Activated CD8-positive, alpha-beta T cell treated with anti-CD3 and anti-CD28 coated beads, Interleukin-2, amount 10 ng/mL, durations not matched to agents 7 days and 5 days (primary cell): ENCODE measurements at regions of chr7 and their contacts with region 1.

Region 1: DNA sequence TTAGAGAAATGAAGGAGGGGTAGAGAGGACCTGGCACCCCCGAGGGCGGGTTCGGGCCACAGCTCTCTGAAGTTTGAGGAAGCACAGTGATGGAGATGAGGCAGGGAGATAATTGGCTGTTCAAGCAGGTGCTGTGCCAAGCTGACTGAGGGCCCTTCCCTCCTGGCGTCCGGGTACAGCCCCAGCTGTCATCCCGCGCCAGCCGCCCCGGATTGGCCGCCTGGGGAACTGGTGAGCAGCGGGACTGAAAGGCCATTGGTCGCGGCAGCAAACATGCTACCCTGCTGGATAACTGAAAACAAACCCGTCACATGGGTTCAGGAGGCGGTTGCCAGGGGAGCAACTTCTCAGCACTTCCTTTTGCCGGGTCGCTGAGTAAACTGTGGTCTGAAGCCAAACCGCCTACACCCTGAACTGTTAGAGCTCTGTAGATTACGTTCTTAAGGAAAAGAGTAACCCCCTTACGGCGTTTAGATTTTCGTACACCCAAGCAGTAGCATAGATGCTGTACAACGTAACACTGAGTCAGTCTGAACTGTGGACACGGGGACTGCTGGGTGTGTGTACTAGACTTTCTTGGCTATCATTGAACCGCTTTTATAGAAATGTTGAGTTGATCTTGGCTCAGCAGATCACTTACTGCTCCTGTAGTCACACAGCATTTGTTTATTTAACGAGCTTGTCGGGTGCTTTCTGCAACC is 1.3 kb downstream of the INSIG1 start:
- DNase-seq: peak; percentile 98
- ATAC-seq: peak; percentile 78
- H3K4me3 Mint-ChIP-seq: peak overlapping the region; percentile 95
- H3K27ac Mint-ChIP-seq: peak overlapping the region; percentile 97
- H3K4me1 Mint-ChIP-seq: peaks cover 57% of the 10 kb centered on the region
- H3K27me3 Mint-ChIP-seq: peaks cover 3% of the 10 kb centered on the region

Region 2: DNA sequence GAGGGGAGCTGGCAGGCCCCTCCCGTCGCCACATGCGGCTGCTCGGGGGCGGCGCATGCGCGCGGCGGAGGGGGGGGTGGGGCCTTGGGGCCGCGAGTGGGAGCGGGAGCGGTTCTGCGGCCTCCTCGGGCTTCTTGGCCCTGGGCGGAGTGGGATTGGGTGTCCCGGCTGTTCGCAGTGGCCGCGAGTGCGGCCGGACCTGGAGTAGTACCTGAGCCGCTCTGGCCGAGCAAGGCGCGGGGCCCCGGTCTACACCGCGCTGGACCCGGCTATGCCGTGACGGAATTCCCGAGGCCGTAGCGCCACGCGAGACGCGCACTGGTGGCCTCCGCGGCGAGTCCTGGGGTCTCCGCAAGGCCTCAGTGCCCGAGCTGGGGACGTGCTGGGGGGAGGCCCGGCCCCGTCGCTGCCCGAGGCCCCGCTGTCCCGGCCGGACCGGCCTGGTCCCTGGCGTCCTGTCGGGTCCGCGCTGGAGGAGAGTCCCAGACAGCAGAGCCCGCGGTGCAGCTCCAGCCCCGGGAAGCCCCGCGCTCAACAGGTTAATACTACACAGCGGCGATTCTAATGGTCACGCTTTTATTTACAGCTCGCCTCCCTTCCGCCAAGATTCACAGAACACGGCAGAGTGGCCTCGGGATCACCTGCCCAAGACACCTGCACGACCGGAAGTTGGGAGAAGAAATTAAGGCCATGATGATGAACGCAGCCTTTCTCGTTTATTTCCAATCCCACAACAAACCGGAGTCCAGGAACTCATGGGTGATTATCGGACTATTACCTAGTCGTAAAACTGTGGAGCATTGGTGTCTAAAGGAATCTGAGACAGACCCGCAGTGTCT is 295.4 kb before region 1 on chr7:
- CTCF ChIA-PET with region 1: interaction called, 3 read pairs
- POLR2A ChIA-PET with region 1: interaction called, 22 read pairs
- DNase-seq: peak; percentile 85
- ATAC-seq: peak; percentile 78
- H3K4me3 Mint-ChIP-seq: peak overlapping the region; percentile 88
- H3K27ac Mint-ChIP-seq: peak overlapping the region; percentile 91
- H3K4me1 Mint-ChIP-seq: peaks cover 11% of the 10 kb centered on the region
- H3K27me3 Mint-ChIP-seq: no peaks in the 10 kb centered on the region

Region 3: DNA sequence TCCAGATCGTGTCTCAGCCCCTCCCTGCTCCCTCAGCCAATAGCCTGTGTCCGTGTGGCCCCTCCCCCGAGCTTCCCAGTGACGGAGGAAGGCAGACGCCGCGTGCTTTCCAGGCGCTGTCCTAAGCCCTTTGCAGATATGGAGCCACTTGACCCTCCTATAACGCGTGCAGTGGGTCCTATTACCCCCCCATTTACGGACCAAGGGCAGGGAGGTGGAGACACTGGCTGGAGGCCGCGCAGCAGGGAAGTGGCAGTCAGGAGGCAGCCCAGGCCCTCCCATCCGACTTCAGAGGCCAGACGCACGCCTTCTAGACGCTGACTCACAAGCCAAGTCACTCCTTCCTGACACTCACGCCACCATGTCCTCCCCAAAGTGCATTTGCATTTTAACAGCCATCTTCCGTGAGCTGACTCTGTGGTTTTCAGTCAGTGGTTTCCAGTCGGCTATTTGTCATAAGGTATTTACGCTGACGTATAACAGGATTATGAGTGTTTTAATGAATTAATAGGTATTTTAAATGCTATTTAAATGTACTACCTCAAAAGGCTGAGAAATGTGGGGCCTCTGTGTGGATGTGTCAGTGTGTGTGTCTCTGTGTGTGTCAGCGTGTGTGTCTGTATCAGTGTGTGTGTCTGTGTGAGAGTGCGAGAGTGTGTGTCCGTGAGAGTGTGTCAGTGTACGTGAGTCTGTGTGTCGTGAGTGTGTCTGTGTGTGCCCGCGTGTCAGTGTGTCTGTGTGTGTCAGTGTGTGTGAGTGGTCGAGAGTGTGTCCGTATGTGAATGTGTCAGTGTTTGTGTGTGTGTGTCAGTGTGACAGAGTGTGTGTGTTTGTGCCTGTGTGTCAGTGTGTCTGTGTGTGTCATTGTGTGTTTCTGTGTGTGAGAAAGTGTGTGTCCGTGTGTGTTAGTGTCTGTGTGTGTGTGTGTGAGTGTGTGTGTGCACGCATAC is 93.3 kb before region 1 on chr7:
- CTCF ChIA-PET with region 1: interaction called, 8 read pairs
- POLR2A ChIA-PET with region 1: interaction called, 69 read pairs
- DNase-seq: peak; percentile 96
- ATAC-seq: peak; percentile 95
- H3K4me3 Mint-ChIP-seq: peak overlapping the region; percentile 71
- H3K27ac Mint-ChIP-seq: peak overlapping the region; percentile 97
- H3K4me1 Mint-ChIP-seq: peaks cover 27% of the 10 kb centered on the region
- H3K27me3 Mint-ChIP-seq: no peaks in the 10 kb centered on the region

Region 4: DNA sequence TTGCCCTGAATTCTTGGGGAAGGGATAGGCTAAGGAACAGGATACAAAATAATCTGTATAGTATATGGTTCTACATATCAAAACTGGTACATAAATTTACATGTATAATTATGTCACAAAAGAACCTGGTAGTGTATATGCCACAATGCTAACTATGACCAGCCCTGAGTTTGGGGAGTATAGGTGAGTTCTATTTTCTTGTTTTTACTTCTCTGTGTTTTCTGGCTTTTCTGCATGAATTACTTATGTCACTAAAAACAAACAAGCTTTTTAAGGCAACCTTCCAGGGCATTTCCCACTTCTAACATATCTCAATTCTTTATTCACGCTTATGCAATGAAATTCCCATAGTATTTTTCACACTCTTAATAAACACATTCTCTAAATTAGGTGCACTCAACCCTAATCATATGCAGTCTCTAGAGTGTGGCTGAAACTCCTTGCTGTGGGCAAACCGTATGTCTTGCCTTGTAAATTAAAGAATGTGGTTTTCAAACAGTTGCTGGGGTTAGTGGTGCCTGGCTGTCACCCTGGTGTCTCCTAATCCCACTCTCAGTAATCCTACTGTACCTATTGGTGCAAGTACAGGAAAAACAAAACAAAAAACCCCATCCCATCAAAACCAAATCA is 15.3 kb before region 1 on chr7:
- CTCF ChIA-PET with region 1: interaction called, 3 read pairs
- POLR2A ChIA-PET with region 1: interaction called, 106 read pairs
- DNase-seq: no peak
- ATAC-seq: peak; percentile 64
- H3K4me3 Mint-ChIP-seq: no peak overlapping the region
- H3K27ac Mint-ChIP-seq: no peak overlapping the region
- H3K4me1 Mint-ChIP-seq: peaks cover 55% of the 10 kb centered on the region
- H3K27me3 Mint-ChIP-seq: peaks cover 17% of the 10 kb centered on the region

Region 5: GRCh38 chr7:155344600-155345433 is 45.8 kb after region 1 on chr7:
- CTCF ChIA-PET with region 1: interaction called, 18 read pairs
- POLR2A ChIA-PET with region 1: interaction called, 12 read pairs
- DNase-seq: peak; percentile 83
- ATAC-seq: peak; percentile 98
- H3K4me3 Mint-ChIP-seq: peak overlapping the region; percentile 48
- H3K27ac Mint-ChIP-seq: no peak overlapping the region
- H3K4me1 Mint-ChIP-seq: peaks cover 8% of the 10 kb centered on the region
- H3K27me3 Mint-ChIP-seq: peaks cover 26% of the 10 kb centered on the region